Activated CD4-positive, alpha-beta memory T cell treated with anti-CD3 and anti-CD28 coated beads, Interleukin-2, amount 10 ng/mL, durations not matched to agents 7 days and 5 days (primary cell): ENCODE measurements at regions of chr12 and their contacts with region 1.

Region 1: DNA sequence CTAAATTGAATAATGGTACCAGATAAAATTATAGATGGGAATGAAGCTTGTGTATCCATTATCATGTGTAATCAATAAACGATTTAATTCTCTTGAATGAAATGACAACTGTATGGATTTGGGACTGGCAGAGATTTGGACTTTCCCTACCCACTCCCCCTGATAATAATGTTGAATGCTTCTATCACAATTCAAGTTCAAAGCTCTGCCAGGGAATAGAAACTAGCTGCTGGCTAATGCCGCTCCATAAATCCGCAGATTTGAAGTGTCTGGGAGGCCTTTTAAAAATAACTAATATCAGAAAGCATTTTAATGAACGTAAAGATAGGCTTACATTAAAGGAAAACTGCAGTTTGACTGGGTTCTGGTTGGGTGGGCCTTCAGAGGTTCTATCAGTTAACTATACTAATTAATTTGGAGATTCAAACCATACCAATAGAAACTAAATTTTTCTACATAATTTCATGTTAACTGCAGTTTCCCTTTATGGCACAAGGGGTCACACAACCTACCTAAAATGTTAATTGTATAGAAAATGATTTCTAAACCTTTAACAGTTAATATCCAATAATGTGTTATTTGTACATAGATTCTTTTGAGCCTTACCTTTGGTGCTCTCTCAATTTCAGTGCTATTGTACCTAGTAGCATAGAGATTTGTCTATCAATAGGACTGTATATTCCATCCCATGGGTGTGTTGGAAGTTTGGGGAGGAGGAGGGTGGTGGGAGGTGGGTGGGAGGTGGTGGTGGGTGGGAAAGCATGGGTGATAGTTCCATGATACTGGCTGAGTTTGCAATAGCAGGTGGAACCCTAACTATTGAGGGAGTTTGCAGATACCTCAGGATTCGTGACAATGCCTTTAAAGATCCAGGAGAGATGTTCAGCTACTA is 4.9 kb downstream of the HNRNPA1 start:
- DNase-seq: no peak
- H3K4me3 Mint-ChIP-seq: no peak overlapping the region
- H3K27ac Mint-ChIP-seq: peak overlapping the region; percentile 3
- H3K4me1 Mint-ChIP-seq: peaks cover 56% of the 10 kb centered on the region
- H3K27me3 Mint-ChIP-seq: no peaks in the 10 kb centered on the region

Region 2: DNA sequence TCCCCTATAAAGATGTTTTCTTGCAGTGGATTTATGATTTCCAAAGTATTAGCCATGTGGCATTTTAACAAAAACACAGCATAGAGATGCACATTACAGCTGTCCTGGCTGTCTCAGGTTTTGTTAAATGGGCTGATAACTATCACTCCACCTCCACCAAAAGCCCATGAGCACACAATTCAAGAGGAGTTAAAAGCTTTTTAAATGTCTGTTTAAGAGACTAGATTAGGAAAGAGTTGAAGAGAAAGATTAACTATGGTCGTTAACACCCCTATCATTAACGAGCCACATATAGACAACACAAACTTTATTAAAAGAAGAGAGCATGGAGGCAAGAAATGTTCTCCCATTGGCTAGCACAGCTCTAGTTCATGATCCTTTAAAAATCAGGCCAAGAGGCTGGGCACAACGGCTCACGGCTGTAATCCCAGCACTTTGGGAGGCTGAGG is 20.0 kb before region 1 on chr12:
- CTCF ChIA-PET with region 1: no interaction called
- POLR2A ChIA-PET with region 1: interaction called, 33 read pairs
- DNase-seq: no peak
- H3K4me3 Mint-ChIP-seq: no peak overlapping the region
- H3K27ac Mint-ChIP-seq: no peak overlapping the region
- H3K4me1 Mint-ChIP-seq: peaks cover 24% of the 10 kb centered on the region
- H3K27me3 Mint-ChIP-seq: no peaks in the 10 kb centered on the region

Region 3: DNA sequence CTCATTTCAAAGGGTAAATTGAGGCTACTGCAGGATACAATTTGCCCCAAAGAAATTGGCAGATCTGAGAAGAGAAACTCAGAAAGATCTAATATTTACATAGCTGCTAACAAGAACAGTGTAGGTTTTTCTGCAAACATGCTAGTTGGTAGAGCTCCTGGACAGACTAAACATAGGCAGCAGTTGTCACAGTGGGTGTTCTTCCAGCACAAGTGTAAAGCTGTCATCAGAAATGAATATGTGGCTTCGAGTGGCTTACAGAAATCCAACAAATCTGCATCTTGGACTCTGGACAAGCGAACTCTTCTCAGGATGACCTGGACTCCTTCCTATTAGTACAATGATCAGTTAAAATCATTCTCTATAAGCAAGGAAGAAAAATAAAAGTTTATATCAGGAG is 11.4 kb before region 1 on chr12:
- CTCF ChIA-PET with region 1: interaction called, 3 read pairs
- POLR2A ChIA-PET with region 1: interaction called, 60 read pairs
- DNase-seq: no peak
- H3K4me3 Mint-ChIP-seq: no peak overlapping the region
- H3K27ac Mint-ChIP-seq: no peak overlapping the region
- H3K4me1 Mint-ChIP-seq: peaks cover 72% of the 10 kb centered on the region
- H3K27me3 Mint-ChIP-seq: no peaks in the 10 kb centered on the region

Region 4: DNA sequence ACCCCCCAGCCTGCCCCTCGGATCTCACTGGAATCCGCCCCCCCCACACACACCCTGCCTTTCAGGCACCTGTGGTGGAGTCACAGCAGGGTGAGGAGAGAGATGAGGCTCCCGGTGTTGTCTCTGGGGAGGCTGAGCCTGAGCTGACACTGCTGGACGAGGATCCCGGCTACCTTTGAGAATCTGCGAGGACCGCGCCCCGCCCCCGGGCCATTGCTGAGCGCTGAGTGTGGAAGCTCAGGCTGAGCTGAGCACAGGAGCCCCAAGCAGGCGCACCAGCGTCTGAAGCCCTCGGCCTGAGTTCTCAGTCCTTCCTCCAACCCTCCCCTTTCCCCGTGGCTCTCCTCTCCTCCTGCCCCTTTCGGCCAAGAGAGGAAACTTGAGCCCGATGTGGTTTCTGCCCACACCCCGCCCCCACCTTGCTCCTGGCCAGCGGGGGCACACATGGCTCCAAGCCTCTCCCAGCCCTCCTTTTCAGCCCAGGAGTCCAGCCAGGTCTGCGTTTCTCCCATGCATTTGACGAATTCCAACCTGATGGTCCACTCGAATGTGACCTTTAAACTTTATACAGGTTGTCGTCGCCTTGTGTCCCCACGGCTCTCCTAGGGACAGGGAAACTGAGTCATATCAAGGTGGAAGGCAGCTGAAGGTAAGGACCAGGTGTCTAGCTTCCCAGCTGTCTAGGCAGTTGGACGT is 15.5 kb after region 1 on chr12 and contains the start of gene NFE2:
- CTCF ChIA-PET with region 1: interaction called, 5 read pairs
- POLR2A ChIA-PET with region 1: interaction called, 24 read pairs
- DNase-seq: peak; percentile 30
- H3K4me3 Mint-ChIP-seq: no peak within 1 kb of the TSS
- H3K27ac Mint-ChIP-seq: no peak within 1 kb of the TSS
- H3K4me1 Mint-ChIP-seq: peaks cover 36% of the 10 kb centered on the region
- H3K27me3 Mint-ChIP-seq: peaks cover 67% of the 10 kb centered on the region
- total RNA-seq, gene NFE2: 0.20 TPM in 1 of 2 experiments, not detected in the other

Region 5: GRCh38 chr12:54306925-54307741 is 21.7 kb after region 1 on chr12:
- CTCF ChIA-PET with region 1: interaction called, 5 read pairs
- POLR2A ChIA-PET with region 1: interaction called, 12 read pairs
- DNase-seq: peak; percentile 56
- H3K4me3 Mint-ChIP-seq: no peak overlapping the region
- H3K27ac Mint-ChIP-seq: peak overlapping the region; percentile 29
- H3K4me1 Mint-ChIP-seq: peaks cover 33% of the 10 kb centered on the region
- H3K27me3 Mint-ChIP-seq: peaks cover 30% of the 10 kb centered on the region

Region 6: GRCh38 chr12:54359033-54359761 is 73.8 kb after region 1 on chr12:
- CTCF ChIA-PET with region 1: interaction called, 13 read pairs
- POLR2A ChIA-PET with region 1: interaction called, 63 read pairs
- DNase-seq: peak; percentile 97
- H3K4me3 Mint-ChIP-seq: no peak overlapping the region
- H3K27ac Mint-ChIP-seq: no peak overlapping the region
- H3K4me1 Mint-ChIP-seq: peaks cover 23% of the 10 kb centered on the region
- H3K27me3 Mint-ChIP-seq: no peaks in the 10 kb centered on the region